Heart left ventricle (tissue), 16 donors: ENCODE measurements at regions of chr7 and their contacts with region 1.

Region 1: GRCh38 chr7:12729112-12729511 is 41.7 kb downstream of the ARL4A start:
- DNase-seq: peak; percentile 82 to 89 (median 88)
- ATAC-seq: peak; percentile 73 to 87 (median 78)
- H3K4me3 ChIP-seq: peak overlapping the region in 3 of 12 donors; percentile 3 to 15 (median 4)
- H3K27ac ChIP-seq: peak overlapping the region; percentile 23 to 75 (median 62)
- H3K4me1 ChIP-seq: peaks cover 4 to 57% (median 40%) of the 10 kb centered on the region in 12 donors
- H3K27me3 ChIP-seq: no peaks in the 10 kb centered on the region
- CTCF ChIP-seq: no peak
- POLR2A ChIP-seq: no peak

Region 2: GRCh38 chr7:12674849-12675248 is 54.3 kb before region 1 on chr7:
- intact Hi-C with region 1: no loop called
- DNase-seq: no peak
- ATAC-seq: peak in 2 of 4 donors; percentile 36 to 41
- H3K4me3 ChIP-seq: no peak overlapping the region
- H3K27ac ChIP-seq: no peak overlapping the region
- H3K4me1 ChIP-seq: peaks cover 0 to 17% (median 0%) of the 10 kb centered on the region in 12 donors
- H3K27me3 ChIP-seq: no peaks in the 10 kb centered on the region
- CTCF ChIP-seq: peak in 10 of 12 donors; percentile 14 to 50 (median 34)
- POLR2A ChIP-seq: no peak

Region 3: GRCh38 chr7:12692479-12693259 is 36.4 kb before region 1 on chr7:
- intact Hi-C with region 1: loop called in 7 of 10 experiments (anchors 2 to 5 kb)
- DNase-seq: no peak
- ATAC-seq: no peak
- H3K4me3 ChIP-seq: no peak overlapping the region
- H3K27ac ChIP-seq: no peak overlapping the region
- H3K4me1 ChIP-seq: peaks cover 0 to 29% (median 14%) of the 10 kb centered on the region in 12 donors
- H3K27me3 ChIP-seq: no peaks in the 10 kb centered on the region
- CTCF ChIP-seq: no peak
- POLR2A ChIP-seq: no peak

Region 4: DNA sequence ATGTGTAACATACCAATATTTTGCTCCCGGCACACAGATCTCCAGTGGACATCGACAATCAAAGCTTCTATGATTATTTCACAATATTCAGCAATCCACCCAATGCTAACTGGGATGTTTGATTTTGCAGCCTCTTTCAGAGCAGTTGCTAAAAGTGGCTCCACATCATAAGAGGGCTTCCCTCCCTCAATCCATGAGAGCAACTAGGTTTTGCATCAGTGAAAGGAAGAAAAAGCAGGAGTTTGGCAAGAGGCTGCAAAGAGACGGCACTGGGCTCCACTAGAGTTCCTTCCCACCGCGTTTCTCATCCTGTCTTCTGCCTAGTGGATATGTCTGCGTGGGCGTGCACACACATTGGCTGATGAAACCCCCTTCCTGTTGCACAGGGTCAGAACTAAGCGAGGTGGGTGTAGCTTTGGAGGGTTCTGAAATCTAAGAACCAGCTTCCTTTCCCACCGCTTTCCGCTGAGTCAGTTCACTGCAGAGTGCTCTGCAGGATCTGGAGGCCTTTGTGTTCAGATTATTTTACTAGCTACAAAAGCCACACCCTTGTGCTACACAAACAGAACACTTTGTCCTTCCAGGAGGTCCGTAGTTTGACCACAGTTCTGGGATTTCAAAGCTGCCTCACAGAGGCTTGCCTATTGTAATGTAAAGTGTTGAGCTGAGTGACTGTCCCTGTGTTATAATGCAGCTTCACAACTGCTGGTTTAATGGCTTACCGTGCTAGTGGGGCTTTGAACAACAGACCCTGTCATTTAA is 13.6 kb before region 1 on chr7:
- intact Hi-C with region 1: loop called in 1 of 10 experiments (anchors 1 kb)
- DNase-seq: peak; percentile 65 to 85 (median 73)
- ATAC-seq: peak; percentile 89 to 99 (median 96)
- H3K4me3 ChIP-seq: peak overlapping the region in 10 of 12 donors; percentile 23 to 34 (median 26)
- H3K27ac ChIP-seq: peak overlapping the region; percentile 56 to 87 (median 72)
- H3K4me1 ChIP-seq: peaks cover 0 to 53% (median 31%) of the 10 kb centered on the region in 12 donors
- H3K27me3 ChIP-seq: no peaks in the 10 kb centered on the region
- CTCF ChIP-seq: no peak
- POLR2A ChIP-seq: peak in 1 of 2 donors; percentile 36

Region 5: GRCh38 chr7:12771378-12771877 is 42.3 kb after region 1 on chr7:
- intact Hi-C with region 1: loop called in 1 of 10 experiments (anchors 5 kb)
- DNase-seq: peak in 4 of 5 donors; percentile 24 to 61 (median 46)
- ATAC-seq: peak; percentile 71 to 97 (median 92)
- H3K4me3 ChIP-seq: peak overlapping the region in 9 of 12 donors; percentile 1 to 35 (median 14)
- H3K27ac ChIP-seq: peak overlapping the region in 10 of 12 donors; percentile 6 to 52 (median 37)
- H3K4me1 ChIP-seq: peaks cover 0 to 31% (median 18%) of the 10 kb centered on the region in 12 donors
- H3K27me3 ChIP-seq: no peaks in the 10 kb centered on the region
- CTCF ChIP-seq: no peak
- POLR2A ChIP-seq: no peak